ENCODE measurements at regions of chr7 and their contacts with region 1.

Region 1: DNA sequence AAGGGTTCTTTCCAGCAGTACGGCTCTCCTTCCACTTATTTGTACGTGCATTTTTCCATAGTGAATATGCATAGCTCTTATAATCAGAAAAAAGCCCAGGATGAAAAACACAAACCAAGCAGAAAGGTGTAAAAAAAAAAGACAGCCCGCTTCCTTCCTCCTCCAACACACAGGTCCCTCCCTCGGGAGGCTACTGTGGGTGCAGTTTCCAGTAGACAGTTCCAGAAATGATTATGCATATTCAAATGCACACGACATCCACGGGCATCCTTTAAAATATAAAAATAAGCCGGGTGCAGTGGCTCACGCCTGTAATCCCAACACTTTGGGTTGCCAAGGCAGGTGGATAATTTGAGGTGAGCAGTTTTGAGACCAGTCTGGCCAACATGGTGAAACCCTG is 59.9 kb downstream of the TNRC18 start:
- DNase-seq: no peak

Region 2: DNA sequence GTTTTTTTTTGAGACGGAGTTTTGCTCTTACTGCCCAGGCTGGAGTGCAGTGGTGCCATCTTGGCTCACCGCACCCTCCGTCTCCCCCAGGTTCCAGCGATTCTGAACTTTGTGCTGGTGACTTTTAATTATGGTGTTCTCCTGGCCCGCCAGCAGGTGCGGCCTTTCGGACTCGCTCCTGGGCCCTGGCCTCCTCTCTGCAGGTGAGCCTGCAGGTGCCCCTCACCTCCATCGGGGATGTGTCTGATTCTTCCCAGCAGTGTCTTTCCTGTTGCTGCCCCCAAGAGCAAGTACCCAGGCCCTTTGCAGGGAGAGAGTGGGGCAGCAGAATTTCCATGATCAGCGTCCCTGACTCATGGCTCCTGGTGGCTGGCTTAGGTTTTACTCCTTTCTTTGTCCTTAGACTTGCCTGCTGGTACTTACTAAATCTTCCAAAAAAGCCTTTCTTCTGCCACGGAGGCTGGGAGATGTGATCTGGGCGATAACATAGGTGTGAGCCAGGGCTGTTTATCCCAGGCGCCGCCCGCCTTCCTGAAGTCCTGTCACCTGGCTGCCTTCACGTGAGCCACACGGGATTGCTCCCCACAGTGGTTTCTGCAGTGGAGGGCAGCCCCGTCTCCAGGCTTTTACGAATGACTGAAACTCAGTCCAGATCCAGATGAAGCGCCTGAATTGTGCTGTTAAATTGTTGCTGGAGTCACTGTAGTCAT is 163.0 kb before region 1 on chr7:
- intact Hi-C with region 1: no loop called
- DNase-seq: no peak

Region 3: GRCh38 chr7:5243261-5243660 is 120.5 kb before region 1 on chr7:
- intact Hi-C with region 1: loop called (anchors 5 kb)
- DNase-seq: no peak

Region 4: DNA sequence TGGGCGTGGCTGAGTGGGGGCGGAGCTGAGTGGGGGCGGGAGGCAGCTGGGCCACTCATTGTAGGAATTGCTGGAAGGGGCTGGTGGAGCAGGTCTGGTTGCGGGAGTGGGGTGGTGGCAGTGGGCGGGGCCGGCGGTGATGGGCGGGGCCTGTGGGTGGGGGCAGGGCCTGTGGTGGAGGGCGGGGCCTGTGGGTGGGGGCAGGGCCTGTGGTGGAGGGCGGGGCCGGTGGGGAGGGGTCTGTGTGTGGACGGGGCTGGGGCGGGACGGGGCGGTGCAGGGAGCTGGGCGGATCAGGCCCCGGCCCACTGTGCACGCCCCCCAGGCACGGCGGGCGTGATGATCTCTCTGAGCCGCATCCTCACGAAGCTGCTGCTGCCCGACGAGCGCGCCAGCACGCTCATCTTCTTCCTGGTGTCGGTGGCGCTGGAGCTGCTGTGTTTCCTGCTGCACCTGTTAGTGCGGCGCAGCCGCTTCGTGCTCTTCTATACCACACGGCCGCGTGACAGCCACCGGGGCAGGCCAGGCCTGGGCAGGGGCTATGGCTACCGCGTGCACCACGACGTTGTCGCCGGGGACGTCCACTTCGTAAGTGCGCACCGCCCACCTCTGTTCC is 67.0 kb before region 1 on chr7:
- intact Hi-C with region 1: no loop called
- DNase-seq: peak in 6 of 10 donors; percentile 23 to 89 (median 42)

Region 5: DNA sequence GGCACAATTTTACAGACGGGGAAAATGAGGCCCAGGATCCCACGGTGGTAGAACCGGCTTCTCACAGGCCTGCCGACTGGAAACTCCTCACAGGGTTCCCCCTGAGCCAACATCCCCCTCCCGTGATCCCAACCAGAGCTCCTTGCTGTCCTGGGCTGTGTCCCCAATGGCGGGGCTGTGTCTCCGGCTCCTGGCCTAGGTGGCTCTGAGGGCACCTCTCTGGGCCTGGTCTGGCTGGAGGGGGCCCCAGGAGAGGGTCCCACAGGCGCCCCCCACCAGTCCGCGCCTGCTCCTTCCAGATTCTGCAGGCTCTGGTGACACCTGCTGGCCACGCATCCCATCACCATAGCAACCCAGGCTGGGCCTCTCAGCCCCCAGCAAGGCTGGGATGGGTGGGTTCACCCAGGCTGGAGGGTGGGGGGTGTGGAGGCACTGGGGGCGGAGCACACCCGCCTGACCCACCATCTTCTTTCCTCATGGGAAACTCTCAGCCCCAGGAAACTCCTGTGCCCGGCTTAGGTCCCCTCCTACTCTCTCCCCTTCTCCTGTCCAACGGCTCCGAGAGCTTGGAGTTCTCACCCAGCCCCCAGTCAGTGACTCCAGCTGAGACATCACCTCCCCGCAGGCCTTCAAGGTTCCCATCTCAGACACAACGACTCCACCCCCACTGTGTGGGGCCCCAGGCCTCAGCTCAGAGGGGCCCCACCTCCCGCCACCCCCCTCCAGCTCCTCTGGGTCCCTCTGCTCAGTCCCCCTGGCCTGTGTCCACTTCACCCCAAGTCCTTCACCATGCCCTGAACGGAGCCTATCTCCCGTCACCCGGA is 87.0 kb after region 1 on chr7:
- intact Hi-C with region 1: loop called (anchors 1 kb)
- DNase-seq: peak in 9 of 10 donors; percentile 62 to 95 (median 69)